ENCODE measurements at regions of chr17 and their contacts with region 1.

Region 1: GRCh38 chr17:16470265-16470664 is 21.7 kb downstream of the LRRC75A start:
- DNase-seq: no peak
- ATAC-seq: peak in 1 of 2 experiments; percentile 31; a peak in 2 of 6 replicates
- H3K4me3 ChIP-seq: no peak overlapping the region
- H3K27ac ChIP-seq: no peak overlapping the region
- H3K4me1 ChIP-seq: 0 out of 3 replicates have a peak, but pooled peaks cover 3% of the 10 kb centered on the region
- CTCF ChIP-seq: no peak
- EP300 ChIP-seq: no peak
- POLR2A ChIP-seq: no peak
- RAD21 ChIP-seq: no peak

Region 2: GRCh38 chr17:16486373-16487250 is 16.3 kb after region 1 on chr17:
- CTCF ChIA-PET with region 1: interaction called, 15 read pairs
- POLR2A ChIA-PET with region 1: interaction called, 5 read pairs
- DNase-seq: peak in 1 of 2 experiments; percentile 38
- ATAC-seq: no peak
- H3K4me3 ChIP-seq: no peak overlapping the region
- H3K27ac ChIP-seq: peak overlapping the region in 1 of 2 experiments; percentile 9; a peak in 1 of 6 replicates
- H3K4me1 ChIP-seq: peaks cover 14% of the 10 kb centered on the region; the same call in 2 of the 3 replicates
- CTCF ChIP-seq: no peak
- EP300 ChIP-seq: no peak
- POLR2A ChIP-seq: no peak
- RAD21 ChIP-seq: no peak

Measured in A549 (cell line).